ENCODE measurements at regions of chr3 and their contacts with region 1.

Region 1: DNA sequence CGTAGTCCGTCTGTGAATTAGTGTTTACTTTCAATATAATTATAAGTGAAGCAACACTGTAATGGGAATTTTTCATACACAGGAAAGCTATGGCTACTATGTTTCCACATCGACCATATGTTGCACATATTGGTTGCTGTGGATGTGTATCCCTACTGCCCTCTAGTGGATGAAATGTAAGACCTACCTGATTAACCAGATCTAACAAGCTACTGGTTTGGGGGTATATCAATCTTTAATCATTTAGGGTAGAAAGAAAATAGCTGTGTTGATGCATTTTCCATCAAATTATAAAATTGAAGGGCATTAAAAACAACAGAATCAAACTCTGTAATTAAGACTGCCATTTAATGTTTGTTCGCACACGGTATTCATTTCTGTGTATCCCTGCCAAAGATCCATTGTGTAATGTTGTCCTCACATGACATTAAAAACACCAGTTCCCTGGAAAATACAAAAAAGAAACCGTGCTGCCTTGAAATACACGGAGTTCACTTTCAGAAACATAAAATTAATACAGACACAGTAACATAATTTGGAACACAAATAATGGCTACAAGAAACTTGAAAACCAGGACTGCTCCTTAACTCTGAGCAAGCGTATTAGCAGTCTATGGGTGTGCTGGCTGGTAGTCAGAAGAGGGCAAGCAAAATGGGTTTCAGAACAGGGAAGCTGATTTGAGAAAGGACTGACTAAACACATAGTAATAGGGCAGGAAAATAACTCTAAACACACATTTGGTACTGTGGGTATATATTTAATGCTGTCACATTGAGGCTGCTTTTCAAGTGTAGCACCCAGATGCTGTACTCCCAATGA is 125.1 kb downstream of the TIGIT start:
- DNase-seq: peak; percentile 78
- H3K4me3 ChIP-seq: no peak overlapping the region
- H3K27ac ChIP-seq: no peak overlapping the region
- H3K4me1 ChIP-seq: no peaks in the 10 kb centered on the region
- H3K27me3 ChIP-seq: no peaks in the 10 kb centered on the region
- CTCF ChIP-seq: peak; percentile 55 to 61
- POLR2A ChIP-seq: no peak

Region 2: GRCh38 chr3:113844622-113845222 is 574.2 kb before region 1 on chr3:
- CTCF ChIA-PET with region 1: interaction called, 14 read pairs
- POLR2A ChIA-PET with region 1: no interaction called
- dilution Hi-C with region 1: no loop called
- intact Hi-C with region 1: loop called (anchors 10 kb)
- DNase-seq: peak; percentile 63
- H3K4me3 ChIP-seq: no peak overlapping the region
- H3K27ac ChIP-seq: no peak overlapping the region
- H3K4me1 ChIP-seq: no peaks in the 10 kb centered on the region
- H3K27me3 ChIP-seq: no peaks in the 10 kb centered on the region
- CTCF ChIP-seq: peak; percentile 34 to 46
- POLR2A ChIP-seq: no peak

Region 3: DNA sequence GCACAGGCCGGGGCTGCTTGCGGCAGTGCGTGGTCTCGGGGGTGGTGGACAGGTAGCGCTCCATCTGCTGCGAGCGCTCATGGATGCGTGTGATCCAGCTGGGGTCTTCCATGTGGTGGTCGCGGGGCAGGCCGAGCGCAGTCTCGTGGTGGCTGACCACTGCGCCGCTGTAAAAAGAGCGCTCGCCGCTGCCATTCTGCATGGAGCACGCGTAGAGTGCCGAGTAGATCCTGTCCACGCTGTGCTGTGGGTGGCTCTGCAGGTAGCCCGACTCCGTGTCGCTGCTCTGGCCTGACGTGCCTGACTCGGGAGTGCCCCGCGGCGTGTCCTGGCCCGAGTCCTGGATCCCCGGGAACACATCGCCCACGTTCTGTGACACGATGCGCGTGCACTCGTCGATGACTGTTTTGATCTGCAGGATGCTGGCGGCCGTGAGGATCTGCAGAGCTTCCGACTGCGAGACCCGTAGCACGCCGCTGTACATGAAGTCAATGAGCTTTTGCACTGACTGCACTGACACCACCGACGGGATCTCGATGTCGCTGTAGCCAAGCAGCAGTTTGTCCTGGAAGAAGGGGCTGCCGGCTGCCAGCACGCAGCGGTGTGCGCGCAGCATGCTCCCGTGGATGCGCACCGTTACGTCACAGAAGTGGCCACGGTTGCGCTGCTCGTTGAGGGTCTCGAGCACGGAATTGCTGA is 67.7 kb before region 1 on chr3:
- CTCF ChIA-PET with region 1: no interaction called
- POLR2A ChIA-PET with region 1: no interaction called
- dilution Hi-C with region 1: no loop called
- intact Hi-C with region 1: no loop called
- DNase-seq: no peak
- H3K4me3 ChIP-seq: no peak overlapping the region
- H3K27ac ChIP-seq: no peak overlapping the region
- H3K4me1 ChIP-seq: no peaks in the 10 kb centered on the region
- H3K27me3 ChIP-seq: no peaks in the 10 kb centered on the region
- CTCF ChIP-seq: no peak
- POLR2A ChIP-seq: no peak

Region 4: GRCh38 chr3:114362815-114363214 is 56.1 kb before region 1 on chr3:
- CTCF ChIA-PET with region 1: interaction called, 14 read pairs
- POLR2A ChIA-PET with region 1: no interaction called
- dilution Hi-C with region 1: no loop called
- intact Hi-C with region 1: loop called (anchors 2 kb)
- DNase-seq: peak; percentile 29
- H3K4me3 ChIP-seq: no peak overlapping the region
- H3K27ac ChIP-seq: no peak overlapping the region
- H3K4me1 ChIP-seq: no peaks in the 10 kb centered on the region
- H3K27me3 ChIP-seq: no peaks in the 10 kb centered on the region
- CTCF ChIP-seq: peak; percentile 2 to 18
- POLR2A ChIP-seq: no peak

Region 5: DNA sequence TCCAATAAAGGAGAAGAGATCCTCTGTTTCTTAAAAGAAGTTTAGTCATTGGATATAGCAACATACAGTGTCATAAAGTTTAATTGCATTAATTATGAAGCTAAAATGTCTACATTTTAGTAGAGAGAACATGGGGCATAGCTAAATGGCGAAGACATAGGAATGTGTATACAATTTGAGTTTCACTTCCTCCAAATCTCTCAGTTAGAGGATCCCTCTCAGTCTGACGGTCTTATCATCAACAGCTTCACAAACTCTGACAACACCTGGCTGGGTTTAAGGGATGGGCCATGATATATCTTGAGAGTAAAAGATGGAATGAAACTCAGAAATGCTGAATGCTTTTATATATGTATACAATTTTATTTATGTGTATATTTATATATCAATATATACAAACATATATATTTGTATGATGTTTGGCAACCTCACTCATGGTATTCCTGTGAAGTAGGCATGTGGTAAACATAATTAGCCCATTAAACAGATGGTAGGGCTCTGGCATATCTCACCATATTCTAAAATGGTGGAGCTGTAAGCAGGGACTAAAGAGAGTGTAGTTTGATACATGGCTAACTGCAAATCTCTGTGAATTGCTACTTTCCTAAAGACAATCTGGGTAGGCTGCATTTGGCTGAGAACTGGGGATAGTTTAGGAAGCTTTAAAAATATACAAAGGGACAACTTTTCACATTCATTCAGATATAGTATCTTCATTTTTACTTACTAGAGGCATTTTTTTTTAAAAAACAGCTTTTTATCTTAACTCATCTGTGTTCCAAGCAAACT is 13.5 kb before region 1 on chr3:
- CTCF ChIA-PET with region 1: interaction called, 49 read pairs
- POLR2A ChIA-PET with region 1: no interaction called
- dilution Hi-C with region 1: no loop called
- intact Hi-C with region 1: no loop called
- DNase-seq: no peak
- H3K4me3 ChIP-seq: no peak overlapping the region
- H3K27ac ChIP-seq: no peak overlapping the region
- H3K4me1 ChIP-seq: peaks cover 6% of the 10 kb centered on the region
- H3K27me3 ChIP-seq: no peaks in the 10 kb centered on the region
- CTCF ChIP-seq: no peak
- POLR2A ChIP-seq: no peak

Region 6: DNA sequence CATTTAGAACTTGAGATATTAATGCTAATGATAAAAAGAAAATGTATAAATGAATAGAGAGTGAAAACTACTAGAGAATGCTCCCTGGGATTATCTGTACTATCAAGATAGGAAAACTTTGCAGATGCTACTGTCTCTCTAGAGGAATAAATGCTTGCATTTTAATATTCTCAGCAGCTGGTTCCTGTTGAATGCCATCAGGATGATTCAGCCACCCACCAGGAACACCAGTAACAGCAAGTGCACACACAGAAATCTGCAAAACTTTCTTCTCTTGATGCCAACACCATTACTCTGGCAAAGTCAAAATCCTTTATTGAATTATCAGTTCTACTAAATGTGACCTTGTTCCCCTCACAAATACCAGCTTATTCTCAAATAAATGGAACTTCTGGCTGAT is 23.3 kb after region 1 on chr3:
- CTCF ChIA-PET with region 1: interaction called, 31 read pairs
- POLR2A ChIA-PET with region 1: interaction called, 3 read pairs
- dilution Hi-C with region 1: no loop called
- intact Hi-C with region 1: no loop called
- DNase-seq: peak; percentile 48
- H3K4me3 ChIP-seq: no peak overlapping the region
- H3K27ac ChIP-seq: no peak overlapping the region
- H3K4me1 ChIP-seq: peaks cover 14% of the 10 kb centered on the region
- H3K27me3 ChIP-seq: no peaks in the 10 kb centered on the region
- CTCF ChIP-seq: no peak
- POLR2A ChIP-seq: no peak